ENCODE measurements at regions of chr3 and their contacts with region 1.

Region 1: GRCh38 chr3:190204200-190204599 is 83.5 kb upstream of the P3H2 start:
- DNase-seq: peak in 1 of 3 donors; percentile 25
- ATAC-seq: peak in 1 of 4 donors; percentile 39
- H3K4me3 ChIP-seq: no peak overlapping the region
- H3K27ac ChIP-seq: no peak overlapping the region
- H3K4me1 ChIP-seq: no peaks in the 10 kb centered on the region
- H3K27me3 ChIP-seq: no peaks in the 10 kb centered on the region
- CTCF ChIP-seq: no peak
- POLR2A ChIP-seq: no peak

Region 2: GRCh38 chr3:189584645-189585044 is 619.6 kb before region 1 on chr3:
- intact Hi-C with region 1: no loop called
- DNase-seq: no peak
- ATAC-seq: no peak
- H3K4me3 ChIP-seq: no peak overlapping the region
- H3K27ac ChIP-seq: no peak overlapping the region
- H3K4me1 ChIP-seq: peaks cover 0 to 4% (median 0%) of the 10 kb centered on the region in 4 donors
- H3K27me3 ChIP-seq: no peaks in the 10 kb centered on the region
- CTCF ChIP-seq: no peak
- POLR2A ChIP-seq: no peak

Region 3: DNA sequence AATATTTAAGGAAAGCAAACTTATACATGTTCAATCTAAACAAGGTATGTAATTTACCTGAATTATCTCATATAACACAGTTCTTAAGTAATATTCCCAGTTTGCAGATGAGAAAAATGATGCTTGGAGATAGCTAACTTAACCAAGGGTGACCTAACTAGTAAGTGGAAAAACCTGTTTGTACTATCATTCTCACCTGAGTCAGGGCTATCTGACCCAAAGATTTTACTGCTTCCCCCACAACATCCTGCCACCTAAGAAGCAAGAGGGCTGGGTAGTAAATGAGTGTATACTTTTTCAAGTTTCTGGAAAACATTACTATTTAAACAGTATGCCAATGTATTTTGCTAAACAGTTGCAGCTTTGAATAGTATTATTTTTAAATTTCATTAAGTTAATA is 562.4 kb before region 1 on chr3:
- intact Hi-C with region 1: no loop called
- DNase-seq: no peak
- ATAC-seq: no peak
- H3K4me3 ChIP-seq: no peak overlapping the region
- H3K27ac ChIP-seq: no peak overlapping the region
- H3K4me1 ChIP-seq: no peaks in the 10 kb centered on the region
- H3K27me3 ChIP-seq: no peaks in the 10 kb centered on the region
- CTCF ChIP-seq: no peak
- POLR2A ChIP-seq: no peak

Region 4: DNA sequence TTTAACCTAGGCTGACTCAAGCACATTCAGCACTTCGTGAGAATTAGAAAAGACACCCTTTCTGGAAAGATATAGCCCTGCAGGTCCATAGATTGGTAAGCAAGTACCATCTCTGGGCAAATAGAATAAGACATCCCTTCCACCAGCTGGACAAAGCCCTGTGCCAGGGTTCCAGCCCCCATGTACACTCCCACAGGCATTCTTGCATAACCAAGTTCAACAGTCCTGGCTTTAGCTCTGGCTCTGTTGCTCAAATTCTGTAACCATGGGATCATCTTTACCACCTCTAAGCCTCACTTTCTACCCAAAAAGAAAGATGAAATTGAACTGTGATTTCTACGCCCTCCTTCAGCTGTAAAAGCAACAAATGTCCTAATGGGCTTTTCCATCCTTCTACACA is 249.5 kb before region 1 on chr3:
- intact Hi-C with region 1: loop called in 1 of 2 experiments (anchors 5 kb)
- DNase-seq: peak in 1 of 3 donors; percentile 55
- ATAC-seq: peak; percentile 45 to 90 (median 76)
- H3K4me3 ChIP-seq: no peak overlapping the region
- H3K27ac ChIP-seq: no peak overlapping the region
- H3K4me1 ChIP-seq: peaks cover 0 to under 1% (median 0%) of the 10 kb centered on the region in 4 donors
- H3K27me3 ChIP-seq: no peaks in the 10 kb centered on the region
- CTCF ChIP-seq: no peak
- POLR2A ChIP-seq: no peak

Region 5: GRCh38 chr3:190155752-190156151 is 48.4 kb before region 1 on chr3:
- intact Hi-C with region 1: no loop called
- DNase-seq: no peak
- ATAC-seq: no peak
- H3K4me3 ChIP-seq: no peak overlapping the region
- H3K27ac ChIP-seq: no peak overlapping the region
- H3K4me1 ChIP-seq: no peaks in the 10 kb centered on the region
- H3K27me3 ChIP-seq: no peaks in the 10 kb centered on the region
- CTCF ChIP-seq: no peak
- POLR2A ChIP-seq: no peak

Region 6: GRCh38 chr3:190265796-190266195 is 61.6 kb after region 1 on chr3:
- intact Hi-C with region 1: no loop called
- DNase-seq: no peak
- ATAC-seq: peak; percentile 48 to 85 (median 52)
- H3K4me3 ChIP-seq: no peak overlapping the region
- H3K27ac ChIP-seq: no peak overlapping the region
- H3K4me1 ChIP-seq: no peaks in the 10 kb centered on the region
- H3K27me3 ChIP-seq: no peaks in the 10 kb centered on the region
- CTCF ChIP-seq: no peak
- POLR2A ChIP-seq: no peak

Measured in right lobe of liver (tissue), 6 donors.